ENCODE measurements at regions of chr17 and their contacts with region 1.

Region 1: GRCh38 chr17:70552230-70552981 is 383.1 kb downstream of the KCNJ2 start:
- DNase-seq: no peak
- H3K4me3 Mint-ChIP-seq: no peak overlapping the region
- H3K27ac Mint-ChIP-seq: no peak overlapping the region
- H3K4me1 Mint-ChIP-seq: no peaks in the 10 kb centered on the region
- H3K27me3 Mint-ChIP-seq: no peaks in the 10 kb centered on the region

Region 2: GRCh38 chr17:69567130-69567529 is 985.3 kb before region 1 on chr17:
- CTCF ChIA-PET with region 1: interaction called, 7 read pairs
- POLR2A ChIA-PET with region 1: no interaction called
- intact Hi-C with region 1: loop called (anchors 5 kb)
- DNase-seq: no peak
- H3K4me3 Mint-ChIP-seq: no peak overlapping the region
- H3K27ac Mint-ChIP-seq: no peak overlapping the region
- H3K4me1 Mint-ChIP-seq: peaks cover 3% of the 10 kb centered on the region
- H3K27me3 Mint-ChIP-seq: peaks cover 4% of the 10 kb centered on the region

Region 3: DNA sequence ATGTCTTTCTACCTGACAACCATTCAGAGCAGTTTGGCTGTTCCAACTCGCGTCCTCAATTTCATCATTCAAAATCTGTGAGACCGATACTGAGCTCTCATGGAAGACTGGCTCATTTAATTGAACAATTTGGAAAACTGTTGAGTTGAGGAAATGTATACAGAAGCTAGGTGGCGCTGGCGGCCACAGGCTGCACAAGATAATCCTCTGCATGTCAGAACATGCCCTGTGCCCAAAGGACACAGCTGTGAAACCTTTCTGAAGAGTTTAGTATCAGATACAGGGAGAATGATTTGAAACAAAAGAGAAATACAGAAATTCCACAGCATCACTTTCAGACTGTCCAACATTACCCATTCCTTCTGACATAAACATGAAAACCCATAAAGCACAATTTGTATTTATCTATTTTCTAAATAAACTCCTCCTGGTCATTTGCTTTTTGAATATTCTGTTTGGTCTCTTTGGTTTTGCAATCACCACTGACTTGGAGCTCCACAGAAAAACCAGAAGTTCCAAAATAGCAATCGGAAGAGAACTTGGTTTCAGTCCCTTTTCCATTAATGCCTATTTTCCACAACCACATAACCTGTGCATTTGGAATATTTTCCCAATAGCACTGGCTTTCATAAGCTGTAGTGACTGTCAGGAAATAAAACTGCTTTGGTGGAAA is 945.1 kb before region 1 on chr17:
- CTCF ChIA-PET with region 1: no interaction called
- POLR2A ChIA-PET with region 1: no interaction called
- intact Hi-C with region 1: loop called (anchors 5 kb)
- DNase-seq: peak; percentile 56
- H3K4me3 Mint-ChIP-seq: no peak overlapping the region
- H3K27ac Mint-ChIP-seq: no peak overlapping the region
- H3K4me1 Mint-ChIP-seq: peaks cover 10% of the 10 kb centered on the region
- H3K27me3 Mint-ChIP-seq: peaks cover 2% of the 10 kb centered on the region

Region 4: DNA sequence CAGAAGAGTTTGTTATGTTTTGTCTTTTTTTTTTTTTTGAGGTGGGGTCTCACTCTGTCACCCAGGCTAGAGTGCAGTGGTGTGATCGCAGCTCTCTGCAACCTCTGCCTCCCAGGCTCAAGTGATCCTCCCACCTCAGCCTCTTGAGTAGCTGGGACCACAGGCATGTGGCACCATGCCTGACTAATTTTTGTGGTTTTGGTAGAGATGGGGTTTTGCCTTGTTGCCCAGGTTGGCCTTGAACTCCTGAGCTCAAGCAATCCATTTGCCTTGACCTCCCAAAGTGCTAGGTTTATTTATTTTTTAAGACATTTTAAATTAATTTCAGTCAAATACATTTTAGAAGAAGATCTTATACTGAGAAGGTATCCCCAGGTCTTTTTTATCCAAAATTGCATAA is 16.4 kb before region 1 on chr17:
- CTCF ChIA-PET with region 1: no interaction called
- POLR2A ChIA-PET with region 1: no interaction called
- intact Hi-C with region 1: no loop called
- DNase-seq: no peak
- H3K4me3 Mint-ChIP-seq: no peak overlapping the region
- H3K27ac Mint-ChIP-seq: no peak overlapping the region
- H3K4me1 Mint-ChIP-seq: no peaks in the 10 kb centered on the region
- H3K27me3 Mint-ChIP-seq: no peaks in the 10 kb centered on the region

Region 5: GRCh38 chr17:70609566-70609965 is 57.2 kb after region 1 on chr17:
- CTCF ChIA-PET with region 1: no interaction called
- POLR2A ChIA-PET with region 1: no interaction called
- intact Hi-C with region 1: no loop called
- DNase-seq: no peak
- H3K4me3 Mint-ChIP-seq: no peak overlapping the region
- H3K27ac Mint-ChIP-seq: no peak overlapping the region
- H3K4me1 Mint-ChIP-seq: no peaks in the 10 kb centered on the region
- H3K27me3 Mint-ChIP-seq: no peaks in the 10 kb centered on the region

Region 6: GRCh38 chr17:70622368-70623260 is 70.2 kb after region 1 on chr17:
- CTCF ChIA-PET with region 1: no interaction called
- POLR2A ChIA-PET with region 1: no interaction called
- intact Hi-C with region 1: no loop called
- DNase-seq: peak; percentile 16
- H3K4me3 Mint-ChIP-seq: no peak overlapping the region
- H3K27ac Mint-ChIP-seq: no peak overlapping the region
- H3K4me1 Mint-ChIP-seq: no peaks in the 10 kb centered on the region
- H3K27me3 Mint-ChIP-seq: no peaks in the 10 kb centered on the region

Measured in activated CD4-positive, alpha-beta memory T cell treated with anti-CD3 and anti-CD28 coated beads for 36 hours (primary cell).